Right cardiac atrium (tissue), 5 donors: ENCODE measurements at regions of chr11 and their contacts with region 1.

Region 1: GRCh38 chr11:44989831-44990566 is 39.3 kb upstream of the TP53I11 start:
- DNase-seq: peak; percentile 87 to 95 (median 94)
- ATAC-seq: peak; percentile 91 to 93
- H3K4me3 ChIP-seq: no peak overlapping the region
- H3K27ac ChIP-seq: peak overlapping the region; percentile 73
- H3K4me1 ChIP-seq: peaks cover 9% of the 10 kb centered on the region
- H3K27me3 ChIP-seq: no peaks in the 10 kb centered on the region

Region 2: GRCh38 chr11:45048870-45049691 is 59.1 kb after region 1 on chr11:
- intact Hi-C with region 1: no loop called
- DNase-seq: peak; percentile 45 to 63 (median 57)
- ATAC-seq: peak; percentile 54 to 73
- H3K4me3 ChIP-seq: no peak overlapping the region
- H3K27ac ChIP-seq: peak overlapping the region; percentile 15
- H3K4me1 ChIP-seq: peaks cover 20% of the 10 kb centered on the region
- H3K27me3 ChIP-seq: no peaks in the 10 kb centered on the region

Region 3: GRCh38 chr11:45089676-45090499 is 99.9 kb after region 1 on chr11:
- intact Hi-C with region 1: loop called in 2 of 4 experiments (anchors 5 to 10 kb)
- DNase-seq: no peak
- ATAC-seq: peak in 1 of 2 donors; percentile 22
- H3K4me3 ChIP-seq: no peak overlapping the region
- H3K27ac ChIP-seq: peak overlapping the region; percentile 70
- H3K4me1 ChIP-seq: peaks cover 15% of the 10 kb centered on the region
- H3K27me3 ChIP-seq: no peaks in the 10 kb centered on the region